ENCODE measurements at regions of chr10 and their contacts with region 1.

Region 1: DNA sequence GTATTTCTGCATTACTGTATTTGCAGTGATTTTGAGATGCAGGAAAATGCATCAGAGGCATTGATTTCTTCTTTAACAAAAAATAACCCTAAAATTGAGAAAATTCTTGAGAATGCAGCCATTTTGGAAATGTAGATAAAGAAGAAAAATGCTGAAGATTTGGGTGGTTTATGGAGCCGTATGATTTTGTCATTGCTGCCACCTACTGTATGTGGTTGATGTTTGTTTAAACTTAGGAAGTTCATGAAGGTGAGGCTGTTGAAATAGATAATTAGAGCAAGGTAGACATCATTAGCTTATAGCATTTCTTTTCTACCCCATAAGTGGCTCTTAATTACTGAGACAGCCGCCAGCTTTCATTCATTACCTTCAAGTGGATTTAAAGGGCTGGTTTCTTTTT is 92.1 kb upstream of the SAMD8 start:
- DNase-seq: no peak
- ATAC-seq: peak; percentile 41
- H3K4me3 Mint-ChIP-seq: no peak overlapping the region
- H3K27ac Mint-ChIP-seq: no peak overlapping the region
- H3K4me1 Mint-ChIP-seq: peaks cover 13% of the 10 kb centered on the region
- H3K27me3 Mint-ChIP-seq: no peaks in the 10 kb centered on the region
- CTCF ChIP-seq: no peak

Region 2: GRCh38 chr10:74419958-74420375 is 599.4 kb before region 1 on chr10:
- CTCF ChIA-PET with region 1: interaction called, 11 read pairs
- POLR2A ChIA-PET with region 1: no interaction called
- intact Hi-C with region 1: loop called (anchors 1 kb)
- DNase-seq: no peak
- ATAC-seq: peak; percentile 58
- H3K4me3 Mint-ChIP-seq: no peak overlapping the region
- H3K27ac Mint-ChIP-seq: peak overlapping the region; percentile 1
- H3K4me1 Mint-ChIP-seq: peaks cover 21% of the 10 kb centered on the region
- H3K27me3 Mint-ChIP-seq: no peaks in the 10 kb centered on the region
- CTCF ChIP-seq: no peak

Region 3: GRCh38 chr10:74738985-74739567 is 280.3 kb before region 1 on chr10:
- CTCF ChIA-PET with region 1: interaction called, 39 read pairs
- POLR2A ChIA-PET with region 1: no interaction called
- intact Hi-C with region 1: loop called (anchors 1 kb)
- DNase-seq: no peak
- ATAC-seq: peak; percentile 68
- H3K4me3 Mint-ChIP-seq: peak overlapping the region; percentile 15
- H3K27ac Mint-ChIP-seq: peak overlapping the region; percentile 67
- H3K4me1 Mint-ChIP-seq: peaks cover 26% of the 10 kb centered on the region
- H3K27me3 Mint-ChIP-seq: no peaks in the 10 kb centered on the region
- CTCF ChIP-seq: no peak

Region 4: DNA sequence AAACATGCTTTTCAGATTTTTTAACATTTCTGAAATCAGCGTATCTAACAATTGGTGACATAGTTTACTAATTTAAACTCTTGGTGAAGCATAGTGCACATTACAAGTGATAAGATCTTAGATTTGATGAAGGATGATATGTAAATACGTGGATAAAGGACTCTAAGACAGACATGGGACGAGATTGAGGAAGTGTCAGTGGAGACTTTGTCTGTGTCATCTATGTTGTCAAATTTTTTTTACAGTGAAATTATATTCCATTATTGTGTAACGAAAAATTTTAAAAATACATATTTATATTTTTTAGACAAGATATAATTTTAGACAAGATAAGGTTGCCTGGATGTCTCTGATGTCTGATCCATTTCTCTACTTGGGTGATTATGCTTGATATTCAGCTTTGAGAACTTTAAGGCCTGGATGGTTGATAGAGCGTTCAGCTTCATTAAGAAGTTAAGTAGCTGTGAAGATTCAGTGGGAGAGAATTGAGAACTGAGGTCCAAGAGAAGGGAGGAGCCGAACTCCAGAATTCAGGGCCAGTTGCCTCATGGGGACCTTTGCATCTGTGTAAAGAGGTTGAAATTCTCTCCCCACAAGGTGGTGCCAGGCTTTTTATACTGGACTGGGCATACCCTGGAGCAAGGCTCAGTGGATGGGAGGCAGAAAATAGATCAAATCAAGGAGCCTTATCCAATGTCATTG is 130.3 kb before region 1 on chr10:
- CTCF ChIA-PET with region 1: interaction called, 3 read pairs
- POLR2A ChIA-PET with region 1: no interaction called
- intact Hi-C with region 1: loop called (anchors 1 kb)
- DNase-seq: no peak
- ATAC-seq: peak; percentile 47
- H3K4me3 Mint-ChIP-seq: no peak overlapping the region
- H3K27ac Mint-ChIP-seq: no peak overlapping the region
- H3K4me1 Mint-ChIP-seq: peaks cover 28% of the 10 kb centered on the region
- H3K27me3 Mint-ChIP-seq: no peaks in the 10 kb centered on the region
- CTCF ChIP-seq: no peak

Region 5: DNA sequence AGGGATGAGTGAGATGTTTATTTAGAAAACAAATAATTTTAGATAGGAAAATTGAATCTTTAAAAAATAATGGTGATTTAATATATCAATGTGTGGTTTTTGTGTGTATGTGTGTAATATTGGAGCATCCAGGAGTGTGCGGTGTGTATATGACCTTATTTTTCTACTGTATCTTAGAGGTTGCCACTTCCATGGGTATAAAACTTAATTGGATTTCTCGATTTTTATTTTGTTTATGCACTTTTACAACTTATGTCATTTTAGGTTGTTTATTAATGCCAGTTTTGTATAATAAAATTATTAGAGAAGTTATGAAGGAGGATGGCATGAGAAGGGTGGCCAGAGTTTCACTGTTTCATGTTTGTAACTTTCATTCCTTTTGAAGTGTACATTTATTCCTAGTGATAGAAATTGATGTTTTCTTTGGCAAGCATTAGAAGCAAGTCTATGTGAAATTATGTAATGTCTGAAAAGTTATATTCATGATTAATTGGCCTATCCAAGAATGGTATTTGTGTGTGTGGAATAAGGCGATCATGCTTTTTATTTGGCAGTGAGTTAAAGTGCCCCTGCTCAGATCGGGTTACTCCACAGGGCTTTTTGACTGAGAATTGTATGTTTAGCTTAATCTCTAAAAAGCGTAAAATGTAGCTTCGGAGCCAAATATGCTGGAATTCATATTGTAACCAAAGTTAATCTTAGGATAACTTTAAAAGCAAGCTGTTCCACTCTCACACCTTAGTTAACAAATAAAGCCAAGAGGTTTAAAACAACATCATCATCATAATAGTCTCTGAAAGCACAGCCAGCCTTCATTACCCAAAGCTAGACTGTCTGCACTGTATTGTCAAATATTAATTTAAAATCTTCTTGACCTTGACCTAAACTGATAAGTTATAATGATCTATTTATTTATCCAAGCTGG is 82.5 kb before region 1 on chr10:
- CTCF ChIA-PET with region 1: no interaction called
- POLR2A ChIA-PET with region 1: no interaction called
- intact Hi-C with region 1: no loop called
- DNase-seq: no peak
- ATAC-seq: no peak
- H3K4me3 Mint-ChIP-seq: no peak overlapping the region
- H3K27ac Mint-ChIP-seq: no peak overlapping the region
- H3K4me1 Mint-ChIP-seq: peaks cover 4% of the 10 kb centered on the region
- H3K27me3 Mint-ChIP-seq: no peaks in the 10 kb centered on the region
- CTCF ChIP-seq: no peak

Region 6: GRCh38 chr10:76618171-76618570 is 1598.8 kb after region 1 on chr10:
- CTCF ChIA-PET with region 1: no interaction called
- POLR2A ChIA-PET with region 1: no interaction called
- intact Hi-C with region 1: no loop called
- DNase-seq: no peak
- ATAC-seq: no peak
- H3K4me3 Mint-ChIP-seq: no peak overlapping the region
- H3K27ac Mint-ChIP-seq: no peak overlapping the region
- H3K4me1 Mint-ChIP-seq: no peaks in the 10 kb centered on the region
- H3K27me3 Mint-ChIP-seq: no peaks in the 10 kb centered on the region
- CTCF ChIP-seq: no peak

Measured in activated B cell treated with CpG ODN at 0.5 μM for 24 hours (primary cell).